ENCODE measurements at regions of chr7 and their contacts with region 1.

Region 1: GRCh38 chr7:139602143-139602722 is 78.7 kb downstream of the CLEC2L start:
- DNase-seq: no peak
- H3K4me3 ChIP-seq: no peak overlapping the region
- H3K27me3 ChIP-seq: no peaks in the 10 kb centered on the region
- CTCF ChIP-seq: peak; percentile 60

Region 2: DNA sequence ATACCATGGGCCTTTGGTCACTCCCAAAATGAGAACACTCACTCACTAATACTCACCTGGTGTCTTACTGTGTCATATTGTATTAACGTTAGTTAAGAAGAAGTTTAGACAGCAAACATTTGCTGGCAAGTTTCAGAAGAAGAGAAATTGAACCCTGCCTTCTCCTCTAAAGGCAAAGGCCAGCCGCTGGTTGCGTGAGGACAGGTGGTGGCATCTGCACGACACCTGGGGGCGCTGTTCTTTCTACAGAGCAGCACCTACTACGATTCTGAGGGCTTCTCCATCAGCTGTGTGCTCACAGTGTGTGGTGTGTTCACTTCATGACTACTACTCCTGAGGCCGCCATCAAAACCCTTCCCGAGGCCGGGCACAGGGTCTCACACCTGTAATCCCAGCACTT is 96.7 kb before region 1 on chr7:
- CTCF ChIA-PET with region 1: no interaction called
- POLR2A ChIA-PET with region 1: interaction called, 22 read pairs
- DNase-seq: no peak
- H3K4me3 ChIP-seq: no peak overlapping the region
- H3K27me3 ChIP-seq: no peaks in the 10 kb centered on the region
- CTCF ChIP-seq: no peak

Region 3: GRCh38 chr7:139588632-139589031 is 13.6 kb before region 1 on chr7:
- CTCF ChIA-PET with region 1: interaction called, 27 read pairs
- POLR2A ChIA-PET with region 1: no interaction called
- DNase-seq: no peak
- H3K4me3 ChIP-seq: no peak overlapping the region
- H3K27me3 ChIP-seq: no peaks in the 10 kb centered on the region
- CTCF ChIP-seq: no peak

Region 4: GRCh38 chr7:139613971-139614411 is 11.8 kb after region 1 on chr7:
- CTCF ChIA-PET with region 1: interaction called, 29 read pairs
- POLR2A ChIA-PET with region 1: no interaction called
- DNase-seq: no peak
- H3K4me3 ChIP-seq: no peak overlapping the region
- H3K27me3 ChIP-seq: no peaks in the 10 kb centered on the region
- CTCF ChIP-seq: no peak

Region 5: GRCh38 chr7:139620676-139621344 is 18.6 kb after region 1 on chr7:
- CTCF ChIA-PET with region 1: interaction called, 29 read pairs
- POLR2A ChIA-PET with region 1: no interaction called
- DNase-seq: no peak
- H3K4me3 ChIP-seq: no peak overlapping the region
- H3K27me3 ChIP-seq: no peaks in the 10 kb centered on the region
- CTCF ChIP-seq: peak; percentile 70

Region 6: GRCh38 chr7:139842401-139843210 is 240.4 kb after region 1 on chr7:
- CTCF ChIA-PET with region 1: no interaction called
- POLR2A ChIA-PET with region 1: no interaction called
- DNase-seq: no peak
- H3K4me3 ChIP-seq: no peak overlapping the region
- H3K27me3 ChIP-seq: no peaks in the 10 kb centered on the region; the same call in 1 of the 2 replicates
- CTCF ChIP-seq: no peak